ENCODE measurements at regions of chr10 and their contacts with region 1.

Region 1: GRCh38 chr10:73857446-73857845 is 16.9 kb downstream of the CAMK2G start:
- DNase-seq: peak; percentile 64
- ATAC-seq: peak; percentile 86
- H3K4me3 Mint-ChIP-seq: peak overlapping the region; percentile 19
- H3K27ac Mint-ChIP-seq: peak overlapping the region; percentile 72
- H3K4me1 Mint-ChIP-seq: peaks cover 54% of the 10 kb centered on the region
- H3K27me3 Mint-ChIP-seq: no peaks in the 10 kb centered on the region
- CTCF ChIP-seq: no peak

Region 2: DNA sequence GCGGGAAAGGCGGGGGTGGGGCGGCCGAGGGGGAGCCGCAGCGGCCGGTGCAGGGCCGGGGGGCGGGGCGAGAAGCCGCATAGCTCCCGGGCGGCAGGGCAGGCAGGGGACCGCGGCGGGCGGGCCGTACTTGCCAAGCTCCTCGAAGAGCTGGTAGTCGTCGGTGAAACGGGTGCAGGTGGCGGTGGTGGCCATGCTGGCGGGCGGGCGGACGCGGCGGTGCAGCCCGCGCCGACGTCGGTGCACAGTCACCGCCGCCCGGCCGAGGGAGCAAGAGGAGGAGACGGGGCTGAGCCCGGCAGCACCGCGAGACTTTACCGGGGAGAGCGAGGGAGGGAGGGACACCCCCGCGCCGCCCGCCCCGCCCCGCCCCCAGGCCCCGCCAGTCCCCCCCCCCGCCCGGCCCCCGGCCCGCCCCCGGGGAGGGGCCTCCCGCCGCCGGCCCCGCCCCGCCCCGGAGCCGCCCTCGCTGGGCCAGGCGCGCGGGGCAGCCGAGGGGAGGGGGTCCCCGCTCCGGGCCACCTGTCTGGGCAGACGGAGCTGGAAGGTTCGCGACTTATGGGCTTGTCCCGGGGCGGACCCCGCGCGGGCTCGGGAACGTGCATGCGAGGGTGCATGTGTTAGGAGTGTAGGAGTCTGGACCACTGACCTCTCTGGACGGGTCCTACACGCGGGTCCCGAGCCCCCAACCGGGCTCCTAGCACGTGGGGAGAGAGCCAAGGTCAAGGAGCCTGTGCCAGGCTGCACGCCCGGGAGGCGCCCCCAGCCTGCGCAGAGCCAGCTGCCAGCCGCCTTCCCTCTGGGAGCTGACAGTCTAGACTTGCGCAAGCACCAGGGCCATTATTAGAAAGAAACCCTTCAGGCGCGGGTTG is 17.1 kb after region 1 on chr10 and contains the start of gene CAMK2G:
- CTCF ChIA-PET with region 1: interaction called, 430 read pairs
- POLR2A ChIA-PET with region 1: interaction called, 32 read pairs
- intact Hi-C with region 1: no loop called
- DNase-seq: peak; percentile 86
- ATAC-seq: peak; percentile 85
- H3K4me3 Mint-ChIP-seq: peak within 1 kb of the TSS; percentile 82
- H3K27ac Mint-ChIP-seq: peak within 1 kb of the TSS; percentile 92
- H3K4me1 Mint-ChIP-seq: peaks cover 65% of the 10 kb centered on the region
- H3K27me3 Mint-ChIP-seq: no peaks in the 10 kb centered on the region
- CTCF ChIP-seq: no peak
- total RNA-seq, gene CAMK2G: 17.8 to 18.5 TPM